ENCODE measurements at regions of chr20 and their contacts with region 1.

Region 1: GRCh38 chr20:35092524-35093266 is at the start of gene TRPC4AP:
- DNase-seq: peak; percentile 85 to 90 (median 88)
- H3K4me3 ChIP-seq: peak within 1 kb of the TSS; percentile 66 to 88
- H3K4me3 Mint-ChIP-seq: peak within 1 kb of the TSS; percentile 90 to 96 (median 92)
- H3K27ac ChIP-seq: peak within 1 kb of the TSS; percentile 67
- H3K27ac Mint-ChIP-seq: peak within 1 kb of the TSS; percentile 77 to 98 (median 94)
- H3K4me1 ChIP-seq: peaks cover 39% of the 10 kb centered on the region
- H3K4me1 Mint-ChIP-seq: peaks cover 26 to 59% (median 43%) of the 10 kb centered on the region in 4 donors
- H3K27me3 ChIP-seq: no peaks in the 10 kb centered on the region
- H3K27me3 Mint-ChIP-seq: no peaks in the 10 kb centered on the region
- total RNA-seq, gene TRPC4AP: 61.2 to 63.0 TPM

Region 2: GRCh38 chr20:34825530-34826362 is 266.9 kb before region 1 on chr20 and contains the start of gene NCOA6:
- CTCF ChIA-PET with region 1: interaction called, 4 read pairs
- POLR2A ChIA-PET with region 1: no interaction called
- intact Hi-C with region 1: loop called (anchors 5 kb)
- DNase-seq: peak; percentile 73 to 79 (median 74)
- H3K4me3 ChIP-seq: peak within 1 kb of the TSS; percentile 80 to 91
- H3K4me3 Mint-ChIP-seq: peak within 1 kb of the TSS; percentile 93 to 98 (median 97)
- H3K27ac ChIP-seq: peak within 1 kb of the TSS; percentile 78
- H3K27ac Mint-ChIP-seq: peak within 1 kb of the TSS; percentile 93 to 99 (median 95)
- H3K4me1 ChIP-seq: peaks cover 34% of the 10 kb centered on the region
- H3K4me1 Mint-ChIP-seq: peaks cover 23 to 48% (median 39%) of the 10 kb centered on the region in 4 donors
- H3K27me3 ChIP-seq: no peaks in the 10 kb centered on the region
- H3K27me3 Mint-ChIP-seq: peaks cover 0 to 1% of the 10 kb centered on the region in 2 donors
- total RNA-seq, gene NCOA6: 29.5 to 29.9 TPM

Region 3: GRCh38 chr20:34955232-34956040 is 137.3 kb before region 1 on chr20 and contains the starts of genes GSS and MYH7B:
- CTCF ChIA-PET with region 1: interaction called, 4 read pairs
- POLR2A ChIA-PET with region 1: no interaction called
- intact Hi-C with region 1: loop called (anchors 2 kb)
- DNase-seq: peak; percentile 92 to 97 (median 94)
- H3K4me3 ChIP-seq: peak within 1 kb of the TSS; percentile 45 to 88
- H3K4me3 Mint-ChIP-seq: peak within 1 kb of the TSS; percentile 93 to 100 (median 97)
- H3K27ac ChIP-seq: peak within 1 kb of the TSS; percentile 71
- H3K27ac Mint-ChIP-seq: peak within 1 kb of the TSS; percentile 93 to 98 (median 98)
- H3K4me1 ChIP-seq: peaks cover 13% of the 10 kb centered on the region
- H3K4me1 Mint-ChIP-seq: peaks cover 19 to 28% (median 21%) of the 10 kb centered on the region in 4 donors
- H3K27me3 ChIP-seq: no peaks in the 10 kb centered on the region
- H3K27me3 Mint-ChIP-seq: no peaks in the 10 kb centered on the region
- total RNA-seq, gene GSS: 41.0 to 43.3 TPM
- total RNA-seq, gene MYH7B: 0.39 to 0.47 TPM

Region 4: DNA sequence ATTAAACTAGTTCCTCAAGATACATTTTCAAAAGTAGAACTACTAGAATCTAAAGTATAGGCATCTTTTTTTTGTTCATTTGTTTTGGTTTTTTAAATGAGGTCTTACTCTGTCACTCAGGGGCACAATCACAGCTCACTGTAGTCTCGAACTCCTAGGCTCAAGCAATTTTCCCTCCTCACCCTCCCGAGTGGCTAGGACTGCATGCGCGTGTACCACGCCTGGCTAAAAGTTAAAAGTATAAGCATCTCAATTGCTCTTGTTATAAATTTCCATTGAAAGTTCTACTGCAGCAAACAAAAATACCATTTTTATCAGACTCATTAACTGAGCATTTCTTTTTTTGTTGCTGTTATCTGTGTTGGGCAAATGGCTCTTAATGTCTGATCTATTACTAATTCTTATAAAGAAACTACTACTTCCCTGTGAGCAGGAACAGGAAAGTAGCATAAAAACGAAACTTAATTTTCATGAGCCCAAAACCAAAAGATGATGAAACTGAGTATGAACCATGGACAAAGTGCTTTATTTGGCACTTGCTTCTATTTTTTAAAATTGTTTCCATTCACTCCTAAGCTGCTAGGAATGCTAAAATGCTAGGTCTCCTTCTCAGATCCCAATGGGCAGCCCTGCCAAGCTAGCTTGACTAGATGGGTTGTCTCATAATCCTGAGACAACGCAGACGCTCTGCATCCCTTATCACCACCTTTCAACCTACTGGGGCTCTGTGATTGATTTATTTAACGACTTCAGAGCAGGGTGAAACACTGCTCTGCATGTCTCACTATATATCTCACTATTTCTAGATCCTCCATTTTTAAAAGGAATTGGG is 37.0 kb before region 1 on chr20:
- CTCF ChIA-PET with region 1: interaction called, 15 read pairs
- POLR2A ChIA-PET with region 1: no interaction called
- intact Hi-C with region 1: no loop called
- DNase-seq: no peak
- H3K4me3 ChIP-seq: no peak overlapping the region
- H3K4me3 Mint-ChIP-seq: peak overlapping the region in 6 of 8 donors; percentile 39 to 76 (median 67)
- H3K27ac ChIP-seq: no peak overlapping the region
- H3K27ac Mint-ChIP-seq: peak overlapping the region in 6 of 7 donors; percentile 28 to 90 (median 48)
- H3K4me1 ChIP-seq: peaks cover 15% of the 10 kb centered on the region
- H3K4me1 Mint-ChIP-seq: peaks cover 22 to 40% (median 32%) of the 10 kb centered on the region in 4 donors
- H3K27me3 ChIP-seq: no peaks in the 10 kb centered on the region
- H3K27me3 Mint-ChIP-seq: no peaks in the 10 kb centered on the region

Region 5: GRCh38 chr20:35207950-35208611 is 115.4 kb after region 1 on chr20:
- CTCF ChIA-PET with region 1: interaction called, 81 read pairs
- POLR2A ChIA-PET with region 1: no interaction called
- intact Hi-C with region 1: loop called (anchors 1 kb)
- DNase-seq: peak; percentile 69 to 78 (median 74)
- H3K4me3 ChIP-seq: no peak overlapping the region
- H3K4me3 Mint-ChIP-seq: no peak overlapping the region
- H3K27ac ChIP-seq: no peak overlapping the region
- H3K27ac Mint-ChIP-seq: no peak overlapping the region
- H3K4me1 ChIP-seq: no peaks in the 10 kb centered on the region
- H3K4me1 Mint-ChIP-seq: no peaks in the 10 kb centered on the region
- H3K27me3 ChIP-seq: no peaks in the 10 kb centered on the region
- H3K27me3 Mint-ChIP-seq: no peaks in the 10 kb centered on the region

Region 6: DNA sequence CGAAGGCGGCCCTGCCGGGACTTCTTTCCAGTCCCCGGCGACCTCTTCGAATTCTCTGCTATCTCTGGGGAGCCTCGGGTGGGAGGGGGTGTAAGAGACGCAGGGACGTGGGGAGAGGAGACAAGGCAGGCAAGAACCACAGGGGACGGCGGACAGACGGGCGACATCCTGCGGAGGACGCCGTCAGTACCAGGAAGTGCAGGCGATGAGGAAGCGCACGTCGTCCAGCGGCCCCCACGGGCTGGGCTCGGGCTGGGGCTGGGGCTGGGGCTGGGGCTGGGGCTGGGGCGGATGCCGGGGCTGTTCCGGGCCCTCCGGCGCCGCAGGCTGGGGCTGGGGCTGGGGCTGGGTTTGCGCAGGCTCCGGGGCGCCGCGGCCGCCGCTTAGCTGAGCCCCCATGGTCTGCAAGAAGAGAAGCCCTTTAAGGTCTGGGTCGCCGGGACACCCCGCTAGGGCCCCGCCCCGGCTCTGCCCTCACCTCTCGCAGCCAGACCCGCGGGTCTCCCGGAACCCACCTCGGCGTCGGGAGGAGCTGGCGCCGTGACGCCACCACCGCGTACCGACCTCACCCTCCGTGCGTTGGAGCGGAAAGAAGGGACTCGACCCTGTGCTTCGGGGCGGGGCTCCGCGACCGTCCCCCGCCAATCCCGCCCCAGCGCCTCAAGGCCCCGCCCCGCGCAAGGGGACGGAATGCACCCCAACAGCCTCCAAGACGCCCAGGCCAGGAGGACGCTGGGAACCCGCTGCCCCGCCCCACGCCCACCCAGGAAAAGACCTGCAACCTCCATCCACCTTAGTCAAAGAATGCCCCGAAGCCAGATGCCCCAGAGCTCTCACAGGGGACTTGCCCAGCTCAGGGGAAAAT is 185.1 kb after region 1 on chr20 and contains the start of gene MMP24OS:
- CTCF ChIA-PET with region 1: interaction called, 4 read pairs
- POLR2A ChIA-PET with region 1: interaction called, 3 read pairs
- intact Hi-C with region 1: loop called (anchors 1 kb)
- DNase-seq: peak; percentile 87 to 92 (median 90)
- H3K4me3 ChIP-seq: peak within 1 kb of the TSS; percentile 59 to 94
- H3K4me3 Mint-ChIP-seq: peak within 1 kb of the TSS; percentile 95 to 98 (median 96)
- H3K27ac ChIP-seq: peak within 1 kb of the TSS; percentile 95
- H3K27ac Mint-ChIP-seq: peak within 1 kb of the TSS; percentile 97 to 100 (median 99)
- H3K4me1 ChIP-seq: peaks cover 14% of the 10 kb centered on the region
- H3K4me1 Mint-ChIP-seq: peaks cover 3 to 41% (median 19%) of the 10 kb centered on the region in 4 donors
- H3K27me3 ChIP-seq: no peaks in the 10 kb centered on the region
- H3K27me3 Mint-ChIP-seq: no peaks in the 10 kb centered on the region
- total RNA-seq, gene MMP24OS: 76.6 to 91.6 TPM

Region 7: GRCh38 chr20:35363190-35363589 is 270.5 kb after region 1 on chr20:
- CTCF ChIA-PET with region 1: no interaction called
- POLR2A ChIA-PET with region 1: no interaction called
- intact Hi-C with region 1: no loop called
- DNase-seq: no peak
- H3K4me3 ChIP-seq: no peak overlapping the region
- H3K4me3 Mint-ChIP-seq: no peak overlapping the region
- H3K27ac ChIP-seq: no peak overlapping the region
- H3K27ac Mint-ChIP-seq: no peak overlapping the region
- H3K4me1 ChIP-seq: no peaks in the 10 kb centered on the region
- H3K4me1 Mint-ChIP-seq: peaks cover 0 to 5% (median 0%) of the 10 kb centered on the region in 4 donors
- H3K27me3 ChIP-seq: no peaks in the 10 kb centered on the region
- H3K27me3 Mint-ChIP-seq: no peaks in the 10 kb centered on the region

Measured in CD4-positive, alpha-beta memory T cell (primary cell).